GM12878 (cell line): ENCODE measurements at regions of chr4 and their contacts with region 1.

Region 1: DNA sequence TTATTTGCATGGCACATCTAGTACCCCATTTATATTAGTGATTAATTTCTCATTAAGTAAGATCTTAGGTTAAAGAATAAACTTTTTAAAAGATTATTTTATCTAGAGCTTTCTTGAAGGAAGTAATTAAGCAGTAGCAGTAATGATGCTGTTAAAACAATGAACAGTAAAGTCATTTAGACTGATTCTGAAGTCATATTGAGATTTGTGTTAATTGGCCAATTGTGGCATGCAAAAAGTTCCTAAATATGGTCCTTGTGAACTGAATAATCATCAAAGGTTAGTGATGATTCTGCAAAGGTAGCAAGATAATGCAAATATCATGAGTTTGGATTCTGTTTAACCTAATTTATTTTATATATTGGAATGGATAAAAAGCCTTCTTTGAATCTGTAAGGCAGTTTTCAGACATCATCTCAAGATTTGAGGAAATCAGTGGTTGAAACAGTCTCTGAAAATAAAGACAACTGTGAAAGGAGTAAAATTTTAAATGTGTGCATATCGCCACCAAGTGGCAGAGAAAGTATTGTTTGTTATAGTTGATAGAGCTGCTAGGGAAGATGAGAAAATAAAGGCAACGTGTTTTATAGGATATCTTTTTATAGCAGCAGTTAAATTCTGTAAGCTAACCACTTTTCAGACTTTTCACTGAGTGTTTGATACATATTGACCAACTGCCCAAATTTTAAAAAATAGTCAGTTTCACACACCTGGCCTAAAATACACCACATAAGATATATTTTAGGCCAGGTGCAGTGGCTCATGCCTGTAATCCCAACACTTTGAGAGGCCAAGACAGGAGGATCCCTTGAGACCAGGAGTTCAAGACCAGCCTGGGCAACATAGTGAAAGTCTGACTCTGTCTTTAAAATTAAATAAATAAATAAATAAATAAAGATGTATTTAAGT is 79.6 kb downstream of the CCKAR start:
- DNase-seq: peak; percentile 44
- ATAC-seq: peak; percentile 85
- H3K4me3 ChIP-seq: no peak overlapping the region
- H3K27ac ChIP-seq: no peak overlapping the region
- H3K4me1 ChIP-seq: no peaks in the 10 kb centered on the region
- H3K27me3 ChIP-seq: no peaks in the 10 kb centered on the region
- CTCF ChIP-seq: peak; percentile 47 to 71 (median 53); a peak in 5 of 6 replicates
- EP300 ChIP-seq: no peak
- POLR2A ChIP-seq: no peak
- RAD21 ChIP-seq: peak; percentile 86

Region 2: DNA sequence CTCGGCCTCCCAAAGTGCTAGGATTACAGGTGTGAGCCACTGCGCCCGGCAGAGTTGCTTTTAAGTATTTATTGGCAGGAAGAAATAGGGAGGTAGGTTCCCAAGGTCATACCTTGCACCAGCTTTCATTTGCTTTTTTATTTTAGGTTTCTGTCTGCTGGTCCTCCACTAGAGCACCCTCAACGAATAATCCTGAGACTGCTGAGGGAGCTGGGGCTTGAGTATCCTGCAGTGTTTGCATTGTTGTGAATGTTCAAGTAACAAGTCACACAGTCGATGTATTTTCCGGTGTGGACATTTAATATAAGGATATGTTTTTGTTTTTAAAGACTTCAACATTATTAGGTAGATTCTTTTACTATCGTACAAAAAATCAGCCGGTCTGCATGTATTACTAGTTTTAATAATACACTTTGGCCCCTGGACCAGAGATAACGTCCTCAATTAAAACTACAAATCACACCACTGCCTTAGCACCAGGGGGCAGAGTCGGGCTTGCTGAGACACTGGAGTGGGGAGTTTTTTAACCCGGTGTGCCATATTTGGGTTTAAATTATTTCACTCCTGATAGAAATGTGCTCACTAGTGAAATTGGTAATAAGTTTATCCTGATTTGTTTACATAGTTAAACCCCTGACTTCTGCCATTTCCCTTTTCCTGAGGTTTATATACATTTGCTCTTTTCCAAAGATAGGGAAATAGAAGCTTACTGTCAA is 485.0 kb before region 1 on chr4:
- CTCF ChIA-PET with region 1: interaction called, 3 read pairs
- POLR2A ChIA-PET with region 1: no interaction called
- RAD21 ChIA-PET with region 1: no interaction called
- SMC1A ChIA-PET with region 1: no interaction called
- in situ Hi-C with region 1: no loop called
- intact Hi-C with region 1: loop called (anchors 5 kb)
- DNase-seq: no peak
- ATAC-seq: peak; percentile 94
- H3K4me3 ChIP-seq: no peak overlapping the region
- H3K27ac ChIP-seq: no peak overlapping the region
- H3K4me1 ChIP-seq: no peaks in the 10 kb centered on the region
- H3K27me3 ChIP-seq: no peaks in the 10 kb centered on the region
- CTCF ChIP-seq: peak; percentile 65 to 71 (median 69)
- EP300 ChIP-seq: no peak
- POLR2A ChIP-seq: no peak
- RAD21 ChIP-seq: peak; percentile 89

Region 3: GRCh38 chr4:26028793-26029567 is 381.7 kb before region 1 on chr4:
- CTCF ChIA-PET with region 1: interaction called, 8 read pairs
- POLR2A ChIA-PET with region 1: no interaction called
- RAD21 ChIA-PET with region 1: interaction called, 20 read pairs
- SMC1A ChIA-PET with region 1: interaction called, 11 read pairs
- in situ Hi-C with region 1: loop called (anchors 10 kb)
- intact Hi-C with region 1: loop called (anchors 2 kb)
- DNase-seq: no peak
- ATAC-seq: peak; percentile 99
- H3K4me3 ChIP-seq: no peak overlapping the region
- H3K27ac ChIP-seq: no peak overlapping the region
- H3K4me1 ChIP-seq: peaks cover 4% of the 10 kb centered on the region
- H3K27me3 ChIP-seq: no peaks in the 10 kb centered on the region
- CTCF ChIP-seq: peak; percentile 75 to 89 (median 85)
- EP300 ChIP-seq: no peak
- POLR2A ChIP-seq: no peak
- RAD21 ChIP-seq: peak; percentile 93

Region 4: DNA sequence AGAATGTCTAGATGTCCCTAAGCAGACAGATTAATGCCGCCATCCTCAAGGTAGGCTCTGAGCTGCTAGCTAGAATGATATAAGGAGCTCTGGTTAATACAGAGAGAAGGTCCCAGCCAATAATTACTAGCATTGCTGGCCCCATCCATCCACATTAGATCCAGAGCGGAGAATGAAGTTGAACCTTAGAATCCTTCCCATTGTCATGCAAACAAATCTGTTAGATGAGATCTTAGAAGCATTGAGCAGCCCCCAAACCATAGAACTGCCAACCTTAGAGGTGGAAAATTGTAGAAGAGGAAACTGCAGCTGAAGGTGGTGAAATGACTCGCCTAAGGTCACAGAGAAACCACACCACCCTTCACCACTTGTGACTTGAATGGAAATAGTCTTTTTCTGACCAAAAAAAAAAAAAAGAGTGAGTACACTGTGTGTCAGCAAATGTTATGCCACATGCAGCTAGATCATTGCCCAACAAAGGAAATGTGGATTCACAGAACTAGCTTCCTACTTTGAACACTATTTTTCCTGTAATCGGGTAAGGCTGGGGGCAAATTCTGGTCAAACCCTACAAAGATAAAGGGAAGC is 334.5 kb before region 1 on chr4:
- CTCF ChIA-PET with region 1: interaction called, 12 read pairs
- POLR2A ChIA-PET with region 1: no interaction called
- RAD21 ChIA-PET with region 1: interaction called, 5 read pairs
- SMC1A ChIA-PET with region 1: interaction called, 22 read pairs
- in situ Hi-C with region 1: loop called (anchors 5 kb)
- intact Hi-C with region 1: loop called (anchors 5 kb)
- DNase-seq: peak; percentile 84
- ATAC-seq: peak; percentile 75
- H3K4me3 ChIP-seq: no peak overlapping the region
- H3K27ac ChIP-seq: peak overlapping the region; percentile 57
- H3K4me1 ChIP-seq: peaks cover 35% of the 10 kb centered on the region
- H3K27me3 ChIP-seq: no peaks in the 10 kb centered on the region
- CTCF ChIP-seq: no peak
- EP300 ChIP-seq: peak; percentile 70 to 90
- POLR2A ChIP-seq: no peak
- RAD21 ChIP-seq: no peak

Region 5: DNA sequence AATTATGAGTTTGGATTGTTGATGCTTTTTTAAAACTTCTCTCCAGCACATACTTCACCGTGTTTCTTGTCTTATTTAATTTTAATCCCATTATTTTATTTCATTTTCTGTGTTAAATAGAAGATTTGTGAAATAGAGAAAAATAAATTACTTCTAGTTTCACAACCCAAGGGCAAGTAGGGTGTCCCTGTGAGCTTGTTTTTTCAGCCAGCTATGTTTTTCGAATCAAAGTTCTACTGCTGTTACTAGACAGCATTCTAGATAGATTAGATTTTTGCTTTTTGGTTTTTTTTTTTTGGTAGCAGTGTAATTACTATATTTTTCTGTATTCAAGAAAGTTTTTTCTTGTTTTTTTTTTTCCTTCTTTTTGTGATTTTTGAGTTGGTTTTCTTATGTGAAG is 29.9 kb before region 1 on chr4:
- CTCF ChIA-PET with region 1: interaction called, 3 read pairs
- POLR2A ChIA-PET with region 1: interaction called, 3 read pairs
- RAD21 ChIA-PET with region 1: interaction called, 7 read pairs
- SMC1A ChIA-PET with region 1: interaction called, 12 read pairs
- in situ Hi-C with region 1: no loop called
- intact Hi-C with region 1: no loop called
- DNase-seq: no peak
- ATAC-seq: no peak
- H3K4me3 ChIP-seq: no peak overlapping the region
- H3K27ac ChIP-seq: no peak overlapping the region
- H3K4me1 ChIP-seq: peaks cover 15% of the 10 kb centered on the region; the same call in 1 of the 2 replicates
- H3K27me3 ChIP-seq: no peaks in the 10 kb centered on the region
- CTCF ChIP-seq: no peak
- EP300 ChIP-seq: no peak
- POLR2A ChIP-seq: no peak
- RAD21 ChIP-seq: no peak

Region 6: GRCh38 chr4:26420913-26421312 is 10.3 kb after region 1 on chr4:
- CTCF ChIA-PET with region 1: interaction called, 18 read pairs
- POLR2A ChIA-PET with region 1: no interaction called
- RAD21 ChIA-PET with region 1: interaction called, 4 read pairs
- SMC1A ChIA-PET with region 1: interaction called, 3 read pairs
- in situ Hi-C with region 1: no loop called
- intact Hi-C with region 1: no loop called
- DNase-seq: no peak
- ATAC-seq: no peak
- H3K4me3 ChIP-seq: no peak overlapping the region
- H3K27ac ChIP-seq: no peak overlapping the region
- H3K4me1 ChIP-seq: no peaks in the 10 kb centered on the region
- H3K27me3 ChIP-seq: no peaks in the 10 kb centered on the region
- CTCF ChIP-seq: no peak
- EP300 ChIP-seq: no peak
- POLR2A ChIP-seq: no peak
- RAD21 ChIP-seq: no peak

Region 7: DNA sequence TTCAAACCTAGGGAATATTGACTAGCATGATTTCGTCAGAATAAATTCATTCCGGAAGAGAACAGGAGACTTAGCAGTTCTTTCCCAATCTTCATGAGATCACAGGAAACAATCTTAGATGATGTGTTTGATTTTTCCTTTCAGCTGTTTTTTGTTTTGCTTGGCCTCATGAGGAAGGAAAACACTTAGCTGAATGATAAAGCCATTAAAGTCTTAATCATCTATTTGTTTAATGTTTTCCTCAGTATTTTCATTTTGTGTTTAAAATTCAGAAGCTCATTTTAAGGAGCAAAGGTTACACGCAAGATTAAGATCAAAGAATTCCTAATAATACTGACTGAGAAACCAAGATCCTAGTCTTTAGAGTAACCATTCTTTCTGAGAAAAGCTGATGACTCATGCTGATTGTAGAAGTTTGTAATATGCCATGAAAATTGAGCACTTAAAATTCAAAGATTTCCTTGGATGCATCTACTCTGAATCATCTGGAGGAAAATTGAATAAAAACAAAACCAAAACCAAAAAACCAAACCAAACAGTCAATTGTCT is 157.9 kb after region 1 on chr4:
- CTCF ChIA-PET with region 1: no interaction called
- POLR2A ChIA-PET with region 1: no interaction called
- RAD21 ChIA-PET with region 1: no interaction called
- SMC1A ChIA-PET with region 1: no interaction called
- in situ Hi-C with region 1: no loop called
- intact Hi-C with region 1: no loop called
- DNase-seq: no peak
- ATAC-seq: no peak
- H3K4me3 ChIP-seq: no peak overlapping the region
- H3K27ac ChIP-seq: no peak overlapping the region
- H3K4me1 ChIP-seq: no peaks in the 10 kb centered on the region
- H3K27me3 ChIP-seq: no peaks in the 10 kb centered on the region
- CTCF ChIP-seq: no peak
- EP300 ChIP-seq: no peak
- POLR2A ChIP-seq: no peak
- RAD21 ChIP-seq: no peak